ENCODE measurements at regions of chr14 and their contacts with region 1.

Region 1: GRCh38 chr14:22589096-22589839 is at the start of gene DAD1:
- DNase-seq: peak; percentile 99
- ATAC-seq: peak; percentile 88
- H3K4me3 Mint-ChIP-seq: peak within 1 kb of the TSS; percentile 99
- H3K27ac Mint-ChIP-seq: peak within 1 kb of the TSS; percentile 100
- H3K4me1 Mint-ChIP-seq: peaks cover 57% of the 10 kb centered on the region
- H3K27me3 Mint-ChIP-seq: peaks cover 2% of the 10 kb centered on the region
- CTCF ChIP-seq: no peak
- total RNA-seq, gene DAD1: 123 and 139 TPM in 2 replicates

Region 2: DNA sequence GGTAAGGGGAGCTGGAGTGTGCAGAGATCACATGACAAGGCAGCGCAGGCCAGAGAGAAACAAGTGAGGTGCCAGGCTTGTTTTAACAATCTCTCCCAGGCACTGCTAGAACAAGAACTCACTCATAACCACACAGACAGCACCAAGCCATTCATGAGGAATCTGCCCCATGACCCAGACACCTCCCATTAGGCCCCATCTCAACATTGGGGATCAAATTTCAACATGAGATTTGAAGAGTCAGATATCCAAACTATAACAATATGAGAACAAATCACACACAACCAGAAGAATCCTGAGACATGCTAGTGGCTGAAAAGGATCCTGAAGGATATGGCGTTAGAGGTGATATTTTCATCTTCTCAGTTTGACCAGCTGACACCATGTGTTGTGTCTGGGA is 33.0 kb after region 1 on chr14:
- CTCF ChIA-PET with region 1: no interaction called
- POLR2A ChIA-PET with region 1: no interaction called
- intact Hi-C with region 1: no loop called
- DNase-seq: no peak
- ATAC-seq: no peak
- H3K4me3 Mint-ChIP-seq: no peak overlapping the region
- H3K27ac Mint-ChIP-seq: no peak overlapping the region
- H3K4me1 Mint-ChIP-seq: no peaks in the 10 kb centered on the region
- H3K27me3 Mint-ChIP-seq: no peaks in the 10 kb centered on the region
- CTCF ChIP-seq: no peak

Region 3: GRCh38 chr14:22748631-22749068 is 159.4 kb after region 1 on chr14:
- CTCF ChIA-PET with region 1: interaction called, 3 read pairs
- POLR2A ChIA-PET with region 1: interaction called, 13 read pairs
- intact Hi-C with region 1: no loop called
- DNase-seq: peak; percentile 24
- ATAC-seq: peak; percentile 78
- H3K4me3 Mint-ChIP-seq: peak overlapping the region; percentile 78
- H3K27ac Mint-ChIP-seq: peak overlapping the region; percentile 99
- H3K4me1 Mint-ChIP-seq: peaks cover 23% of the 10 kb centered on the region
- H3K27me3 Mint-ChIP-seq: no peaks in the 10 kb centered on the region
- CTCF ChIP-seq: no peak

Region 4: DNA sequence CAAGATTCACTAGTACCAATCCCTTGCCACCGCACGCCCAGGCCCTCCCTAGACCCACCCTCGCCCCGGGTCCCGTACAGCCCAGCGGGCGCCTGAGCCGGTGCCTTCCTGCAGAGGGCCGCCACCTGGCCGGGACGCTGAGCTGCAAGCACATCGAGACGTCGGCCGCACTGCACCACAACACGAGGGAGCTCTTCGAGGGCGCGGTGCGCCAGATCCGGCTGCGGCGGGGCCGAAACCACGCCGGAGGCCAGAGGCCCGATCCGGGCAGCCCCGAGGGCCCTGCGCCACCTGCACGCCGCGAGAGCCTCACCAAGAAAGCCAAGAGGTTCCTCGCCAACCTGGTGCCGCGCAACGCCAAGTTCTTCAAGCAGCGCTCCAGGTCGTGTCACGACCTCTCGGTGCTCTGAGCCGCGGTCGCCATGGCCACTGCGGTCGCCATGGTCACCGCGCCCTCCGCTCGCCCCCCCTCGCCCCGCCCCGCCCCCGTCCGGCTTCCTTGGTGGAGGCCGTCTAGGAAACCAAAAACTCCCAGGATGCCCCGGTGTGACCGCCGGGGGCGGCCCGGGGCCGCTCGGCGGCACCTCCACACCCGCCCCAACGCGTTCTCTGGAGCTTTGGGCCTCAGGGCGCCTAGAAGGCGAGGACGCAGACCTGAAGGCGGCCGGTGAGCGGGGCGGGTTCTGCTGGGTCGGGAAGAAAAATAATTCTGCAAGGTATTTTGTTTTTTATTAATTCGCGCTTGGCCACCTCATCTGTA is 297.4 kb after region 1 on chr14:
- CTCF ChIA-PET with region 1: no interaction called
- POLR2A ChIA-PET with region 1: interaction called, 3 read pairs
- intact Hi-C with region 1: loop called (anchors 1 kb)
- DNase-seq: peak; percentile 71
- ATAC-seq: peak; percentile 55
- H3K4me3 Mint-ChIP-seq: peak overlapping the region; percentile 90
- H3K27ac Mint-ChIP-seq: peak overlapping the region; percentile 97
- H3K4me1 Mint-ChIP-seq: peaks cover 80% of the 10 kb centered on the region
- H3K27me3 Mint-ChIP-seq: no peaks in the 10 kb centered on the region
- CTCF ChIP-seq: no peak

Region 5: GRCh38 chr14:22929104-22929847 is 340.0 kb after region 1 on chr14 and contains the start of gene PRMT5:
- CTCF ChIA-PET with region 1: no interaction called
- POLR2A ChIA-PET with region 1: no interaction called
- intact Hi-C with region 1: loop called (anchors 1 kb)
- DNase-seq: peak; percentile 83
- ATAC-seq: peak; percentile 93
- H3K4me3 Mint-ChIP-seq: no peak within 1 kb of the TSS
- H3K27ac Mint-ChIP-seq: no peak within 1 kb of the TSS
- H3K4me1 Mint-ChIP-seq: peaks cover 14% of the 10 kb centered on the region
- H3K27me3 Mint-ChIP-seq: no peaks in the 10 kb centered on the region
- CTCF ChIP-seq: no peak
- total RNA-seq, gene PRMT5: 75.3 and 96.5 TPM in 2 replicates